Naive thymus-derived CD4-positive, alpha-beta T cell (primary cell): ENCODE measurements at regions of chr2 and their contacts with region 1.

Region 1: GRCh38 chr2:65056215-65057053 is at the start of gene CEP68:
- DNase-seq: peak; percentile 88 to 96 (median 95)
- ATAC-seq: peak; percentile 96
- H3K4me3 ChIP-seq: peak within 1 kb of the TSS; percentile 54
- H3K4me3 Mint-ChIP-seq: peak within 1 kb of the TSS; percentile 79 to 99 (median 94)
- H3K27ac ChIP-seq: peak within 1 kb of the TSS; percentile 76
- H3K27ac Mint-ChIP-seq: peak within 1 kb of the TSS; percentile 84 to 97 (median 90)
- H3K4me1 ChIP-seq: peaks cover 10 to 42% of the 10 kb centered on the region in 2 donors
- H3K4me1 Mint-ChIP-seq: peaks cover 41 to 81% (median 61%) of the 10 kb centered on the region in 7 donors
- H3K27me3 ChIP-seq: no peaks in the 10 kb centered on the region
- H3K27me3 Mint-ChIP-seq: peaks cover 0 to 2% (median 0%) of the 10 kb centered on the region in 5 donors
- total RNA-seq, gene CEP68: 8.5 to 52.0 (median 20.8) TPM

Region 2: DNA sequence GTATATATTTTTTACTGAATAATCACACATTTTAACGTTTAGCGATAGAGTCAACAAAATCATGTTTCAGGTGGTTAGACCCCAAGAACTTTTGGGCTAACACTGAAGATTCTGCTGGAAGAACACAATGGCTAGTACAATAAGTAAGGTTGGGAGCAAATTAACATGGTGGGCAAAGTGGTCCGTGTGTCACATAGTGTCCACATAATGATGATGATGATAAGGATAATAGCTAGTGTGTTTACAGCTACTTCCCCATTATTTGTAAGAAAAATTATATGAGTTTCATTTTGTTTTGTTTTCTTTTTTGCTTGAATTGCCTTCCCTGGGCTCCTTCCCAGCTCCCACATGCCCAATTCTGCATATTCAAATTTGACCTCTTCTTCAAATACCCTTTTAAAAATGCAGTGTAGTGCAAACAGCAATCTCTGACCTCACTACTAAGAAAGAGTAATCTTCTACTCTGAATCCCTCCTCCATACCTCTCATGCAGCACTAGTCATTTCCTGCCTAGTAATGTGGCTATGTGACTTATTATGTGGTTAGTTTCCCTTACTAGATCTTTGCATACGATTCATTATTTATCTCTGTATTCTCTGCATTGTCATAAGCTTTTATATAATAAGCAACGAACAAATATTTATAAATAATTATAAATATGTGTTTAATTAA is 1020.3 kb before region 1 on chr2:
- CTCF ChIA-PET with region 1: no interaction called
- POLR2A ChIA-PET with region 1: no interaction called
- intact Hi-C with region 1: loop called in 1 of 2 experiments (anchors 5 kb)
- DNase-seq: peak in 7 of 9 donors; percentile 60 to 75 (median 64)
- ATAC-seq: peak; percentile 98
- H3K4me3 ChIP-seq: peak overlapping the region; percentile 25
- H3K4me3 Mint-ChIP-seq: peak overlapping the region; percentile 30 to 86 (median 60)
- H3K27ac ChIP-seq: peak overlapping the region; percentile 54
- H3K27ac Mint-ChIP-seq: peak overlapping the region; percentile 49 to 93 (median 83)
- H3K4me1 ChIP-seq: peaks cover 20 to 42% of the 10 kb centered on the region in 2 donors
- H3K4me1 Mint-ChIP-seq: peaks cover 29 to 70% (median 54%) of the 10 kb centered on the region in 7 donors
- H3K27me3 ChIP-seq: no peaks in the 10 kb centered on the region
- H3K27me3 Mint-ChIP-seq: no peaks in the 10 kb centered on the region

Region 3: GRCh38 chr2:64234785-64235184 is 821.6 kb before region 1 on chr2:
- CTCF ChIA-PET with region 1: no interaction called
- POLR2A ChIA-PET with region 1: no interaction called
- intact Hi-C with region 1: no loop called
- DNase-seq: no peak
- ATAC-seq: no peak
- H3K4me3 ChIP-seq: no peak overlapping the region
- H3K4me3 Mint-ChIP-seq: no peak overlapping the region
- H3K27ac ChIP-seq: no peak overlapping the region
- H3K27ac Mint-ChIP-seq: no peak overlapping the region
- H3K4me1 ChIP-seq: no peaks in the 10 kb centered on the region
- H3K4me1 Mint-ChIP-seq: peaks cover 2 to 10% (median 6%) of the 10 kb centered on the region in 7 donors
- H3K27me3 ChIP-seq: no peaks in the 10 kb centered on the region
- H3K27me3 Mint-ChIP-seq: no peaks in the 10 kb centered on the region

Region 4: GRCh38 chr2:64767670-64768468 is 288.6 kb before region 1 on chr2:
- CTCF ChIA-PET with region 1: no interaction called
- POLR2A ChIA-PET with region 1: interaction called, 5 read pairs
- intact Hi-C with region 1: loop called in 1 of 2 experiments (anchors 5 kb)
- DNase-seq: peak; percentile 35 to 78 (median 55)
- ATAC-seq: peak; percentile 89
- H3K4me3 ChIP-seq: peak overlapping the region; percentile 80
- H3K4me3 Mint-ChIP-seq: peak overlapping the region; percentile 90 to 99 (median 96)
- H3K27ac ChIP-seq: peak overlapping the region; percentile 73
- H3K27ac Mint-ChIP-seq: peak overlapping the region; percentile 92 to 97 (median 95)
- H3K4me1 ChIP-seq: peaks cover 3 to 12% of the 10 kb centered on the region in 2 donors
- H3K4me1 Mint-ChIP-seq: peaks cover 9 to 40% (median 23%) of the 10 kb centered on the region in 7 donors
- H3K27me3 ChIP-seq: no peaks in the 10 kb centered on the region
- H3K27me3 Mint-ChIP-seq: peaks cover 0 to 15% (median 0%) of the 10 kb centered on the region in 5 donors

Region 5: DNA sequence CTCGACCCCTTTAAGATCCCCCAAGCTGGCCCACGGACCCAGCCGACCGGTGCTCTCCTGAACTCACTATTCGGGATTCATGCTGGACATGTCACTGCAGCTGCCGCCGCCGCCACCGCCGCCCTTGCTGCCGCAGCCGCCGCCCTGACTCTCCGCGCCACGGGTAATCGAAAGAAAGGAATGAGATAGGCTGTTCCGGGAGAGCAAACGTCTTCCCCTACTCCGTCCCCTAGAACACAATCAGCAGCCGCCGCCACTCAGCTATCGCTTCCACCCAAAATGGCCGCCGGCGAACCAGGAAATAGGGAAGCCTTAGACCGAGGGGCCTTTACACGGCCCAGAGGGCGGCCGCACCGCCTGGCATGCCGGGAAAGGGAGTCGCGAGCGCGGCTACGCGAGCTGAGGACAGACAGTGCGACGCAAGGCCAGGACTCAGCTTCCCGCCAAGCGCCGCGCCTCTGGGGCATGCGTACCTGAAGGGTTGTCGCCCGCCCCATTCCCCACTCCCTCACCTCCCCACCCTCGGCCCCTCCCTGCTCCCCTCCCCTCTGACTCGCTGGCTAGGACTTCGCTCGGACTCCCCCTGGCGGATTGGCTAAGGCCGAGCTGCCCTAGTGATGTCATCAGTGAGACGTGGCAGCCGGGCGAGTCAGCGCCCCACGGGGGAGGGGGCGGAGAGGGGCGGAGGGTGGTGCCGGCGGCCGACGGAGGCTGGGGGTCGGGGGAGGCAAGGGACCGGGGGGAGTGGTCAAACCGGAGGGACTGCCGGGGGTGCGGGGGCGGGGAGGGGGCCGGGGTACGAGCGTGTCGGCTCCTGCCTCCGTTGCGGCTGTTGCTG is 73.6 kb after region 1 on chr2 and contains the start of gene RAB1A:
- CTCF ChIA-PET with region 1: interaction called, 7 read pairs
- POLR2A ChIA-PET with region 1: interaction called, 51 read pairs
- intact Hi-C with region 1: loop called (anchors 1 kb)
- DNase-seq: peak; percentile 91 to 99 (median 98)
- ATAC-seq: peak; percentile 94
- H3K4me3 ChIP-seq: peak within 1 kb of the TSS; percentile 78
- H3K4me3 Mint-ChIP-seq: peak within 1 kb of the TSS; percentile 90 to 100 (median 98)
- H3K27ac ChIP-seq: peak within 1 kb of the TSS; percentile 98
- H3K27ac Mint-ChIP-seq: peak within 1 kb of the TSS; percentile 95 to 100 (median 99)
- H3K4me1 ChIP-seq: peaks cover 24 to 25% of the 10 kb centered on the region in 2 donors
- H3K4me1 Mint-ChIP-seq: peaks cover 24 to 47% (median 35%) of the 10 kb centered on the region in 7 donors
- H3K27me3 ChIP-seq: no peaks in the 10 kb centered on the region
- H3K27me3 Mint-ChIP-seq: peaks cover 0 to 17% (median 0%) of the 10 kb centered on the region in 5 donors
- total RNA-seq, gene RAB1A: 48.8 to 78.6 (median 65.8) TPM

Region 6: DNA sequence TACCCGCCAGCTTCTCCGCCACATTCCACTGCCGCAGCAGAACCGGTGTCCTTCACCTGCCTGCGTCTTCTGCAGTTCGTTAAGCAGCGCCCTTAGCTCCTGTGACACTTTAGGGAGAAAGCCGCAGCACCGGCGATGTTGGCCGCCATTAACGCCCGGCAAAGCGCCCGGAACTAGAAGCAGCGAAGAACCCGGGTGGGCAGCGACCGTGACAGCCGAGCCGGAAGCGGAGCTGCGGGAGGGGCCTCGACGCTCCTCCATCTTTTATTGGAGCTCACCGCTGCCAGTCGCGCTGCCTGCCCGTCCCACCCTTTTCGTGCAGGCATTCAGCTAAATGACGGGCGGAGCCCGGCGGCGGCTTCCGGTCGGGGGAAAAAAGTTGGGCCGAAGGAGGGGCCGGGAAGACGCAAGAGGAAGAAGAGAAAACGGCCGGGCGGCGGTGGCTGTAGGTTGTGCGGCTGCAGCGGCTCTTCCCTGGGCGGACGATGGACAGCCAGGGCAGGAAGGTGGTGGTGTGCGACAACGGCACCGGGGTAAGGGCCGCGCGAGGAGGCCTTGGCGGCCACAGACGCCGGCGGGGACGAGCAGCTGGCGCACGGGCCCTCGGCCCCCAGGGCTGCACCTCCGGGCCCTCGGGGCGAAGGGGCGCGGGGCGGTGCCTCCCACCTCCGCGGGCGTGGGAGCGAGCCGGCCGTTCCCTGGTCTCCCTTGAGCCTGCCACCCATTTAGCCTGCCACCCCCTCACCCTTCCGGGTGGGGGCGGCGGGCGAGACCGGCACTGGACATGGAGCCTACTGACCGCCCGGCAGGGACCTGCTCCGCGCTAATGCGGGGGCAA is 171.2 kb after region 1 on chr2 and contains the start of gene ACTR2:
- CTCF ChIA-PET with region 1: no interaction called
- POLR2A ChIA-PET with region 1: interaction called, 24 read pairs
- intact Hi-C with region 1: loop called (anchors 1 kb)
- DNase-seq: peak; percentile 86 to 94 (median 93)
- ATAC-seq: peak; percentile 97
- H3K4me3 ChIP-seq: peak within 1 kb of the TSS; percentile 99
- H3K4me3 Mint-ChIP-seq: peak within 1 kb of the TSS; percentile 95 to 100 (median 98)
- H3K27ac ChIP-seq: peak within 1 kb of the TSS; percentile 97
- H3K27ac Mint-ChIP-seq: peak within 1 kb of the TSS; percentile 97 to 99 (median 98)
- H3K4me1 ChIP-seq: peaks cover 25 to 38% of the 10 kb centered on the region in 2 donors
- H3K4me1 Mint-ChIP-seq: peaks cover 24 to 54% (median 44%) of the 10 kb centered on the region in 7 donors
- H3K27me3 ChIP-seq: no peaks in the 10 kb centered on the region
- H3K27me3 Mint-ChIP-seq: no peaks in the 10 kb centered on the region
- total RNA-seq, gene ACTR2: 180 to 435 (median 287) TPM